H1 (cell line): ENCODE measurements at regions of chr1 and their contacts with region 1.

Region 1: DNA sequence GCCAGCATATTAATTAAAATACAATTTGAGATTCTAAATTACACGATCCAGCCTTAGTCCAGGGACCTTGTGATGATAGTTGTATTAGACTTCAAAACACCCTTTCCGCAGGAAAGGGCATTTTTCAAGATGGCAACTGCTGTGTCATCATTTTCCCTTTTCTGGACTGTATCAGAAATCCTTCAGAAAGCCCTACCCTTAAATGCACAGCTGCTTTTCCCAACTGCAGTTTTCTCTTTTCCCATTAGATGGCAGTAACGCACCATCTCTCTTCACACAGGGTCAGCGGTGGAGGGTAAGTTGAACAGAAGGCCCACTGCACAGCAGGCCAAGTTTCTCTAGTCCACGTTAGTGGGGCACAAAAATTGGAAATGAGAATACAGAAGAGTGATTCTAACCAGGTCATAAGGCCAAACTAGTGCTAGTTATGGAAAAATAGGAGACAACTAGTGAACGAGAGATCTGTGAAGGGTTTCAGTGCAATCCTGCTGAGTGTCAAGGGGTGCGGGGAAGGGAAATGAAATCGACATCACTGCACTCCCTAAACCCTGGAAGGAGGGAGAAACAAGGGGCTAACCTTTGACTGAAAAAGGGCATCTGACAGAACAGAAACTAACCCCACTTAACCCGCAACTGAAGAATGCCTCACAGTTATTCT is 22.1 kb upstream of the TDRD10 start:
- DNase-seq: peak in 1 of 2 experiments; percentile 78
- H3K4me3 ChIP-seq: no peak overlapping the region
- H3K27ac ChIP-seq: no peak overlapping the region
- H3K4me1 ChIP-seq: no peaks in the 10 kb centered on the region; a peak in 1 of 7 replicates
- H3K27me3 ChIP-seq: no peaks in the 10 kb centered on the region
- CTCF ChIP-seq: peak; percentile 35 to 89 (median 84)
- EP300 ChIP-seq: no peak
- POLR2A ChIP-seq: no peak
- RAD21 ChIP-seq: peak; percentile 96 to 97

Region 2: GRCh38 chr1:154459080-154459479 is 20.8 kb before region 1 on chr1:
- CTCF ChIA-PET with region 1: interaction called, 10 read pairs
- POLR2A ChIA-PET with region 1: no interaction called
- DNase-seq: no peak
- H3K4me3 ChIP-seq: no peak overlapping the region
- H3K27ac ChIP-seq: no peak overlapping the region
- H3K4me1 ChIP-seq: 0 out of 7 replicates have a peak, but pooled peaks cover 0 to 1% (median 0%) of the 10 kb centered on the region in 4 experiments
- H3K27me3 ChIP-seq: no peaks in the 10 kb centered on the region
- CTCF ChIP-seq: no peak
- EP300 ChIP-seq: no peak
- POLR2A ChIP-seq: no peak
- RAD21 ChIP-seq: no peak

Region 3: DNA sequence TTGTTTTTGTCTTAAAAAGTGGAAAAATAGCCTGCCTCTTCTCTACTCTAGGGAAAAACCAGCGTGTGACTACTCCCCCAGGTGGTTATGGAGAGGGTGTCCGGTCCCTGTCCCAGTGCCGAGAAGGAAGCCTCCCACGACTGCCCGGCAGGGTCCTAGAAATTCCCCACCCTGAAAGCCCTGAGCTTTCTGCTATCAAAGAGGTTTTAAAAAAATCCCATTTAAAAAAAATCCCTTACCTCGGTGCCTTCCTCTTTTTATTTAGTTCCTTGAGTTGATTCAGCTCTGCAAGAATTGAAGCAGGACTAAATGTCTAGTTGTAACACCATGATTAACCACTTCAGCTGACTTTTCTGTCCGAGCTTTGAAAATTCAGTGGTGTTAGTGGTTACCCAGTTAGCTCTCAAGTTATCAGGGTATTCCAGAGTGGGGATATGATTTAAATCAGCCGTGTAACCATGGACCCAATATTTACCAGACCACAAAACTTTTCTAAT is 12.9 kb before region 1 on chr1:
- CTCF ChIA-PET with region 1: interaction called, 30 read pairs
- POLR2A ChIA-PET with region 1: no interaction called
- DNase-seq: no peak
- H3K4me3 ChIP-seq: no peak overlapping the region
- H3K27ac ChIP-seq: no peak overlapping the region
- H3K4me1 ChIP-seq: peaks cover 0 to 4% (median 2%) of the 10 kb centered on the region in 4 experiments; a peak in 4 of 7 replicates
- H3K27me3 ChIP-seq: no peaks in the 10 kb centered on the region
- CTCF ChIP-seq: peak; percentile 16 to 31 (median 24)
- EP300 ChIP-seq: no peak
- POLR2A ChIP-seq: no peak
- RAD21 ChIP-seq: peak; percentile 17 to 44; a peak in 3 of 4 replicates

Region 4: DNA sequence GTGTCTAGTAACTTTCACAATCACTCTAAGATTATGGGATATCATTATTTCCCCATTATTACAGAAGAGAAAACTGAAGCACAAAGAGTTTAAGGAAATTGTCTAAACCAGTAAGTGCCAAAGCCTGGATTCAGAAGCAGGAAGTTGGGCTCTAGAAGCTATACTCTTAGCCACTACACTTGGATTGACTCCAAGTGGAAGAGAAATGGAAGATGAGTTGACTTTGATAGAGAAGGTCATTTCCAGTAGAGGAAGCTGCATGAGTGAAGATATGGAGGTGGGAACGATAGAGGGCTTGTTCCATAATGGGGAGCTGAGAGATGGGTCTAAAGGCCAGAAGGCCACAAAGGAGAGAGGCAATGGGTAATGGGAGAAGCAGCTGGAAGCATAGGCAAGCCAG is 10.4 kb after region 1 on chr1:
- CTCF ChIA-PET with region 1: interaction called, 13 read pairs
- POLR2A ChIA-PET with region 1: no interaction called
- DNase-seq: no peak
- H3K4me3 ChIP-seq: no peak overlapping the region
- H3K27ac ChIP-seq: no peak overlapping the region
- H3K4me1 ChIP-seq: peaks cover 0 to 4% (median 1%) of the 10 kb centered on the region in 4 experiments; a peak in 2 of 7 replicates
- H3K27me3 ChIP-seq: no peaks in the 10 kb centered on the region
- CTCF ChIP-seq: no peak
- EP300 ChIP-seq: no peak
- POLR2A ChIP-seq: no peak
- RAD21 ChIP-seq: no peak

Region 5: DNA sequence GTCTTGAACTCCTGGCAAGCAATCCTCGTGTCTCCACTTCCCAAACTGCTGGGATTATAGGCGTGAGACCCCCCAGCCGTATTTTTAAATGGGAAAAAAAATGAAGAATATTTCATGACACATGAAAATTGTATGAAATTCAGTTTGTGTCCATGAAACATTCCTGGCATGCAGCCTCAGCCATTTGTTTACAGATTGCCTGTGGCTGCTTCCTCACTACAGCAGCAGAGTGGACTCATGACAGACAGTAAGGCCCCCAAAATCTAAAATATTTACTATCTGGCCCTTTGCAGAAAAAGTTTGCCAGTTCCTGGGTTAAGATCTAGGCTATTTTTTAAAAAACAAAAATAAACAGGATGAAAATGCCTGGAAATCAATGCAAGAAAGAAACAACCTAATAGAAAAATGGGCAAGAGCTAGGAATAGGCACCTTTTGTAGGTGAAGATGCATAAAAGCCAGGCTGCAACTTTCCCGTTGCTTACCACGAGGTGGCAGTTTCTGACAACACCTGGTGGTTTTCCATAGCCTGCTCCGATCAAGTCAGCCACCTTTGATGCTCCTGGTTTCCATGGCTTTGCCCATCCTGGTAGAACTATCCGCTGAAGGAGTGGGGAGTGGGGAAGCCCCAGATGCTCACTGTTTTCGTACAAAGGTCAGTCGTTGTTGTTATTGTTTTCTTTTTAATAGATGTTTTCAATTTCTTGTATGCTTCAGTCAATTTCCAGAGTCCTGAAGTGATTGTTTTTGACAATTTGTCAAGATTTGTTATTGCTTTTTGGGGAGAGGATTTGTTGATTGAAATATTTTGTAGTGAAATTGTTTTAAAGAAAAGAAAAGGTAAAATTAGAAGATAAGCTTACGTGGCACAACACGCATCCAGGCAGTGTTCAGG is 54.3 kb after region 1 on chr1:
- CTCF ChIA-PET with region 1: interaction called, 41 read pairs
- POLR2A ChIA-PET with region 1: no interaction called
- DNase-seq: peak in 1 of 2 experiments; percentile 62
- H3K4me3 ChIP-seq: no peak overlapping the region
- H3K27ac ChIP-seq: no peak overlapping the region
- H3K4me1 ChIP-seq: no peaks in the 10 kb centered on the region
- H3K27me3 ChIP-seq: no peaks in the 10 kb centered on the region
- CTCF ChIP-seq: peak; percentile 52 to 87 (median 80)
- EP300 ChIP-seq: peak in 1 of 2 experiments; percentile 39; a peak in 1 of 3 replicates
- POLR2A ChIP-seq: no peak
- RAD21 ChIP-seq: peak; percentile 83 to 84

Region 6: DNA sequence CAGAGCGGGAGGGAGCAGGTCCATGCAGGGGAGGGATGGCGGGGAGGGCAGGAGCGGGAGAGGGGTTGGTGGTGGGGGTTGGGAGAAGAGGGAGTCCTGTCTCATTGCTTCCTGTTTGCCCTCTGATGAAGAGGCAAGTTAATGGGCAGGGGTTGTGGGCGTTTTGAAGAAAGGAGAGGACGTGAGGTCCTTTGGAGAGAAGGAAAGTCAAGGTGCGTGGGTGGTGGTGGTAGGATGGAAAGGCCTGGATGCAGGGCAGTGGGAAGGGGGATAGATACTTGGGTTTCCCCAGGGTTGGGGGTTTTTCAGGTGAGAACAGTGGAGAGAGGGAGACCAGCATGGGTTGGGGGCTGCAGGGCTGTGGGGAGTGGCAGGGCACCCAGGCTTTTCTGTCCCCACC is 61.3 kb after region 1 on chr1:
- CTCF ChIA-PET with region 1: interaction called, 117 read pairs
- POLR2A ChIA-PET with region 1: no interaction called
- DNase-seq: no peak
- H3K4me3 ChIP-seq: no peak overlapping the region
- H3K27ac ChIP-seq: no peak overlapping the region
- H3K4me1 ChIP-seq: peaks cover 0 to 4% (median 3%) of the 10 kb centered on the region in 4 experiments; a peak in 2 of 7 replicates
- H3K27me3 ChIP-seq: no peaks in the 10 kb centered on the region
- CTCF ChIP-seq: no peak
- EP300 ChIP-seq: no peak
- POLR2A ChIP-seq: no peak
- RAD21 ChIP-seq: no peak